Calu3 (cell line): ENCODE measurements at regions of chrX and their contacts with region 1.

Region 1: GRCh38 chrX:10014462-10015356 is 47.6 kb downstream of the CLDN34 start:
- DNase-seq: peak; percentile 95
- H3K4me3 Mint-ChIP-seq: peak overlapping the region; percentile 69
- H3K27ac Mint-ChIP-seq: no peak overlapping the region
- H3K4me1 Mint-ChIP-seq: peaks cover 34% of the 10 kb centered on the region
- H3K27me3 Mint-ChIP-seq: no peaks in the 10 kb centered on the region
- CTCF ChIP-seq: no peak

Region 2: GRCh38 chrX:10062352-10062751 is 47.6 kb after region 1 on chrX:
- CTCF ChIA-PET with region 1: no interaction called
- intact Hi-C with region 1: loop called (anchors 5 kb)
- DNase-seq: peak; percentile 26
- H3K4me3 Mint-ChIP-seq: peak overlapping the region; percentile 16
- H3K27ac Mint-ChIP-seq: peak overlapping the region; percentile 17
- H3K4me1 Mint-ChIP-seq: peaks cover 21% of the 10 kb centered on the region
- H3K27me3 Mint-ChIP-seq: no peaks in the 10 kb centered on the region
- CTCF ChIP-seq: no peak